IMR-90 (cell line): ENCODE measurements at regions of chr6 and their contacts with region 1.

Region 1: DNA sequence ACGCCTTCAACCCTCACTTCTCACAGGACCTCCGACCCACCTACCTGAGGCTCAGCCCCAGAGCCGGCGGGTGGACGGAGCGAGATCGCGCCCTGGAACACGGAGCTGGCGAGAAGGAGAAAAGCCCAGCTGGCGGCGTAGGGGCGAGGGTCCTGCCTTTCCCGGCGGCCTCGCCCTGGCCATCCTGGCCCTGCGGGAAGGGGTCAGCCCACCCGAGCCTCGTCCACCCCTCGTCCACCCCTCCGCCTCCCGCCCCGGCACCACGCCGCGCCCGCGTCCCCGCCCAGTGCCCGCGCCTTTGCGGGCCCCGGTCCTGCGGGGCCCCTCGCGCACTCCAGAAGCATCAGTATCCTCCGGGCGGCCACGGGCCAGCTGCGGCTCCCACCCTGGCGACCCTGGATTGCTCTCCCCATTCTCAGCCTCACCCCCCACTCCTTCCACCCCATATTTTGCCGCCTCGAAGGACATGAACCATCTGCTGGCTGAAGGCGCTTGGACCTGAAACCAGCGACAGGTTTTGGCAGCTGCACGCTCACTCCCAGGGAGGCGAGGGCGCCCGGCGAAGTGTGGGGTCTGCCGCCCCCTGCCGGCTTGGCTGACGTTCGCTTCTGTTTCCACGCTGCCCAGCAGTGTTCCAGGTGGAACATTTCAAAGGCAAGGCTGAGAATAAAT is 65.1 kb downstream of the PLG start:
- DNase-seq: no peak
- ATAC-seq: peak; percentile 46; the same call in 1 of the 2 replicates
- H3K4me3 ChIP-seq: no peak overlapping the region
- H3K27ac ChIP-seq: no peak overlapping the region
- H3K4me1 ChIP-seq: no peaks in the 10 kb centered on the region
- H3K27me3 ChIP-seq: no peaks in the 10 kb centered on the region
- CTCF ChIP-seq: no peak
- POLR2A ChIP-seq: no peak
- RAD21 ChIP-seq: no peak

Region 2: DNA sequence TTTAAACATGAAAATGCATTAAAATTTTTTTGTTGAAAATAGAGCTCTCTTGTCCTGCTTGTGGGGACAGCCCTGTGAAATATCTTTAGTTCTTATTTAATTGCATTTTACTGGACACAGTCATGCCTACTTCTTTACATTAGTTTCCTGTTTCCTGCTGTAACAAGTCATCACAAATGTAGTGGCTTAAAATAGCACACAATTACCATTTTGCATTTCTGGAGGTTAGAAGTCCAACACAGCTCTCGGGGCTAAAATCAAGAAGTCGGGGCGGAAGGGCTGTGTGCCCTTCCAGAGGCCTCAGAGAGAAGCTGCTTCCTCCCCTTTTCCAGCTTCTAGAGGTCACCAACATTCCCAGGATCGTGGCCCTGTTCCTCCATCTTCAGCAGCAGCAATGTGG is 937.6 kb before region 1 on chr6:
- CTCF ChIA-PET with region 1: no interaction called
- POLR2A ChIA-PET with region 1: no interaction called
- dilution Hi-C with region 1: no loop called
- in situ Hi-C with region 1: no loop called
- intact Hi-C with region 1: no loop called
- DNase-seq: peak; percentile 21
- ATAC-seq: no peak
- H3K4me3 ChIP-seq: no peak overlapping the region
- H3K27ac ChIP-seq: no peak overlapping the region
- H3K4me1 ChIP-seq: peaks cover 4% of the 10 kb centered on the region; the same call in 1 of the 2 replicates
- H3K27me3 ChIP-seq: no peaks in the 10 kb centered on the region
- CTCF ChIP-seq: no peak
- POLR2A ChIP-seq: no peak
- RAD21 ChIP-seq: no peak

Region 3: DNA sequence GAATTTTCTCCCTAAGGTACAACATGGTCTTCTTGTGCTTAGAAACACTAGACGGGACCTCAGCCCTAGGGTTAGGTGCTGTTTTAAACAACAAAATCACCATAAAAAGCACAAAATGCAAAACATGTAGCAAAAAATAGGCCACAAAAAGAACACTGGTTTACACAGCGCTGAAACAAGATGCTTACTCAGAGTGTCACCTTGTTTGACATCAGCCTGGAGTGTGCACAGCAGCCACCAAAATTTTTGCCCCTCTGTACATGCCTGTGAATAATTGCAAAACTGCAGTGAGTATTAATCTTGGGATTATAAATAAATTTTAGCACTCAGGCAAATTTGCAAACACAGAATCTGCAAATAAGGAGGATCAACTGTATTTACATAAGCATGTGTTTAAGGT is 45.0 kb after region 1 on chr6:
- CTCF ChIA-PET with region 1: interaction called, 10 read pairs
- POLR2A ChIA-PET with region 1: no interaction called
- dilution Hi-C with region 1: no loop called
- in situ Hi-C with region 1: no loop called
- intact Hi-C with region 1: no loop called
- DNase-seq: no peak
- ATAC-seq: no peak
- H3K4me3 ChIP-seq: no peak overlapping the region
- H3K27ac ChIP-seq: no peak overlapping the region
- H3K4me1 ChIP-seq: no peaks in the 10 kb centered on the region
- H3K27me3 ChIP-seq: no peaks in the 10 kb centered on the region
- CTCF ChIP-seq: no peak
- POLR2A ChIP-seq: no peak
- RAD21 ChIP-seq: no peak

Region 4: GRCh38 chr6:160845748-160846147 is 78.6 kb after region 1 on chr6:
- CTCF ChIA-PET with region 1: no interaction called
- POLR2A ChIA-PET with region 1: no interaction called
- dilution Hi-C with region 1: no loop called
- in situ Hi-C with region 1: no loop called
- intact Hi-C with region 1: no loop called
- DNase-seq: no peak
- ATAC-seq: no peak
- H3K4me3 ChIP-seq: no peak overlapping the region
- H3K27ac ChIP-seq: no peak overlapping the region
- H3K4me1 ChIP-seq: no peaks in the 10 kb centered on the region
- H3K27me3 ChIP-seq: no peaks in the 10 kb centered on the region
- CTCF ChIP-seq: no peak
- POLR2A ChIP-seq: no peak
- RAD21 ChIP-seq: no peak